Activated T-helper 1 cell treated with anti-CD3 and anti-CD28 coated beads, Interleukin-12 subunit alpha, Interleukin-12 subunit beta, Interleukin-2, Interleukin-4 antibody, amounts not matched to agents 30 ng/mL and 10 ng/mL and 1 ng/mL, durations not matched to agents 14 hours and 24 hours and 36 hours (primary cell): ENCODE measurements at regions of chr12 and their contacts with region 1.

Region 1: GRCh38 chr12:57744777-57745484 is at the start of gene TSPAN31:
- DNase-seq: peak; percentile 90
- H3K4me3 Mint-ChIP-seq: peak within 1 kb of the TSS; percentile 94
- H3K27ac Mint-ChIP-seq: peak within 1 kb of the TSS; percentile 92
- H3K4me1 Mint-ChIP-seq: peaks cover 63% of the 10 kb centered on the region
- H3K27me3 Mint-ChIP-seq: no peaks in the 10 kb centered on the region
- total RNA-seq, gene TSPAN31: 24.0 and 24.5 TPM in 2 replicates

Region 2: GRCh38 chr12:57476162-57476992 is 268.6 kb before region 1 on chr12:
- intact Hi-C with region 1: loop called (anchors 5 kb)
- DNase-seq: peak; percentile 67
- H3K4me3 Mint-ChIP-seq: peak overlapping the region; percentile 93
- H3K27ac Mint-ChIP-seq: peak overlapping the region; percentile 97
- H3K4me1 Mint-ChIP-seq: peaks cover 54% of the 10 kb centered on the region
- H3K27me3 Mint-ChIP-seq: no peaks in the 10 kb centered on the region

Region 3: GRCh38 chr12:57583008-57583831 is 161.7 kb before region 1 on chr12:
- intact Hi-C with region 1: loop called (anchors 1 kb)
- DNase-seq: peak; percentile 61
- H3K4me3 Mint-ChIP-seq: no peak overlapping the region
- H3K27ac Mint-ChIP-seq: no peak overlapping the region
- H3K4me1 Mint-ChIP-seq: peaks cover 7% of the 10 kb centered on the region
- H3K27me3 Mint-ChIP-seq: peaks cover 3% of the 10 kb centered on the region

Region 4: DNA sequence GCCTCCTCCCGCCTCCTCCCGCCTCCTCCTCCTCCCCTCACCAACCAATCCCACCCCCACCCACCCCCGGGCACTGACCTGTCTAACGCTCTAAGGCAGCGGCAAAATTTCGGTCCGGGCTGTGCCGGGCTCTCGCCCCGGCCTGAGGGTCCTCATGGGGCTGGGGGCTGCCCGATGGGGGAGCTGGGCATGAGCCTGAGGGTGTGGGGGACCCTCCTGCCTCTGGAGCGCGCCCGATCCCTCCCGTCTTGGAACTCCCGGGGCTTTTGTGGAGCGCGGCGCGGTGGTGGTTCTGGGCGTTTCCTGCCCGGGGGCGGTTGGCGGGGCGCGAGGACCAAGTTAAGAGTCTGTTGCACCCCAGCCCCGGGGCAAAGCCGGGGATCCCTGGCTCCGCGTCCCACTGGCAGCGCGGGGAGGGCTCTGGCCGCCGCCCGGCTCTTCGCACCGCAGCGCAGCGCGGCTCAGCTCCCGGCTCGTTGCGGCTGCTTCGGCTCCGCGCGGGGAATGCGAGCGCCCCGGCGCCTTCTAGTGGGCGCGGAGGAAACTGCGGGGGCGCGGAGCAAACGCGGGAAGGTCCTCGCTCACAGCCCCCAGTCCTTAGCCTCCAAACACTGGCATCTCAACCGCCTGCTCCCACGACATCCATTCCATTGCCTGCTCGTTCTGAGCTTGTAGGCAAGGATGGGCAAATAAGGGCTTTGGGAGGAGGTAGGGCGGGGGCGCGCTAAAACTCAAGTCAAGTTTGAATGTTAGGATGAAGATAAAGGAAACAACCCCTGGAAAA is 112.0 kb before region 1 on chr12 and contains the start of gene B4GALNT1:
- intact Hi-C with region 1: loop called (anchors 1 kb)
- DNase-seq: peak; percentile 63
- H3K4me3 Mint-ChIP-seq: peak within 1 kb of the TSS; percentile 79
- H3K27ac Mint-ChIP-seq: no peak within 1 kb of the TSS
- H3K4me1 Mint-ChIP-seq: peaks cover 6% of the 10 kb centered on the region
- H3K27me3 Mint-ChIP-seq: peaks cover 54% of the 10 kb centered on the region
- total RNA-seq, gene B4GALNT1: 4.4 and 4.6 TPM in 2 replicates

Region 5: DNA sequence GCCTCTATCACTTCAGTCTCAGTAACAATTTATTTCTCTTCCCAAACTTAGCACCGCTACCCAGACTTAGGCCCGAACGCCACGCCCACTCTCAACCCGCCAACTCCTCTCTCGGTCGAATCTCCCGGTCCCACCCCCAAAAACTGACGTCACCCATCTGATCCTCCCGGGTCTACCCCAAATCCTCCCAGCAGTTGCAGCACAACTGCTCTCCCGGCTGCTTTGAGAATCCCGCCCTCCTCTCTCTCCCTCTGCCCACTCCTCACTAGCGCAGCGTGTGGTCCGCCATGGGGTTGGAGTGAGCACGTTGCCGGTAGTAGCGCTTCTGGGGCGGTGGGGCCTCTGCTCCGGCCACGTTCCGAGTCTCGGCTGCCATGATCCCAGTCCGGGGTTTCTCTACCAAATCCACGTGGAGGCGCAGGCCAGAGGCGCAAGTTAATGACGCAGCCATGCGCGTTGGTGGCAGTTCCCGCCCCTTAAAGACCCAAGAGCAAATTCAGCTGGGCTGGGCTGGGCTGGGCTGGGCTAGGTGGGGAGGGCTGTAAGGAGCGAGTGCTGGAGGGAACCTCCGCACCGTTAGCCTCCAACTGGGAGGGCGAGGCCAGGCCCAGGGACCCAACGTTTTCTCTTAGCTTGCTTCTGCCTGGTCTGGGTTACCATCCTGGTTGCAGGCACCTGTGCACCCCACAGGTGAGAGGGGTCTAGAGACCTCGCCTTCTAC is 26.9 kb after region 1 on chr12 and contains the start of gene METTL1:
- intact Hi-C with region 1: loop called (anchors 1 kb)
- DNase-seq: peak; percentile 90
- H3K4me3 Mint-ChIP-seq: peak within 1 kb of the TSS; percentile 93
- H3K27ac Mint-ChIP-seq: peak within 1 kb of the TSS; percentile 99
- H3K4me1 Mint-ChIP-seq: peaks cover 40% of the 10 kb centered on the region
- H3K27me3 Mint-ChIP-seq: no peaks in the 10 kb centered on the region
- total RNA-seq, gene METTL1: 89.7 and 90.0 TPM in 2 replicates